Activated T-helper 1 cell treated with anti-CD3 and anti-CD28 coated beads, Interleukin-12 subunit alpha, Interleukin-12 subunit beta, Interleukin-2, Interleukin-4 antibody, amounts not matched to agents 30 ng/mL and 10 ng/mL and 1 ng/mL, durations not matched to agents 14 hours and 24 hours and 36 hours (primary cell): ENCODE measurements at regions of chr1 and their contacts with region 1.

Region 1: GRCh38 chr1:152654110-152654509 is 9.1 kb upstream of the LCE2D start:
- DNase-seq: peak; percentile 35
- H3K4me3 Mint-ChIP-seq: no peak overlapping the region
- H3K27ac Mint-ChIP-seq: no peak overlapping the region
- H3K4me1 Mint-ChIP-seq: peaks cover 4% of the 10 kb centered on the region
- H3K27me3 Mint-ChIP-seq: peaks cover 16% of the 10 kb centered on the region

Region 2: GRCh38 chr1:153220606-153221303 is 566.6 kb after region 1 on chr1:
- intact Hi-C with region 1: loop called (anchors 1 kb)
- DNase-seq: no peak
- H3K4me3 Mint-ChIP-seq: no peak overlapping the region
- H3K27ac Mint-ChIP-seq: no peak overlapping the region
- H3K4me1 Mint-ChIP-seq: peaks cover 14% of the 10 kb centered on the region
- H3K27me3 Mint-ChIP-seq: peaks cover 9% of the 10 kb centered on the region